CD4-positive, alpha-beta T cell (primary cell): ENCODE measurements at regions of chr1 and their contacts with region 1.

Region 1: DNA sequence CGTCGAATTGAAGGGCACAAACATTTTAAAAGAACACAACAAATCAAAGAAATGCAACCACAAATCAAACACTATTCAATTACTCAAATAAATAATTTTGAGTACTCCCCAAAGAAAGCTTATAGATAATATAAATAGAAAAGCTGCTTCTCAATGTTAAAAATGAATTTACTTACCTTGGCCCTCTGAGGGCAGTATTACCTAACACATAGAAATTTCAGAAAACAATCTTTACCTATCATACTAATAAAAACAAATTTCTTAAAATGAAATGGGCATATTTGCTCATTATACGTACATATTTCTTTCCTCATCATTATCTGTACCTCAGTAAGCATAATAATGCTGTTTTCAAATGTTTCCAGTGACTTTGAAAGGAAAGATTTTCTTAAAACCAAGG is 141.8 kb downstream of the AKT3 start:
- DNase-seq: peak in 3 of 14 experiments; percentile 19 to 27 (median 20)
- ATAC-seq: no peak
- H3K4me3 ChIP-seq: no peak overlapping the region
- H3K4me3 Mint-ChIP-seq: no peak overlapping the region
- H3K27ac ChIP-seq: no peak overlapping the region
- H3K27ac Mint-ChIP-seq: no peak overlapping the region
- H3K4me1 ChIP-seq: no peaks in the 10 kb centered on the region
- H3K4me1 Mint-ChIP-seq: peaks cover 32% of the 10 kb centered on the region
- H3K27me3 ChIP-seq: no peaks in the 10 kb centered on the region
- H3K27me3 Mint-ChIP-seq: no peaks in the 10 kb centered on the region
- CTCF ChIP-seq: peak; percentile 50

Region 2: DNA sequence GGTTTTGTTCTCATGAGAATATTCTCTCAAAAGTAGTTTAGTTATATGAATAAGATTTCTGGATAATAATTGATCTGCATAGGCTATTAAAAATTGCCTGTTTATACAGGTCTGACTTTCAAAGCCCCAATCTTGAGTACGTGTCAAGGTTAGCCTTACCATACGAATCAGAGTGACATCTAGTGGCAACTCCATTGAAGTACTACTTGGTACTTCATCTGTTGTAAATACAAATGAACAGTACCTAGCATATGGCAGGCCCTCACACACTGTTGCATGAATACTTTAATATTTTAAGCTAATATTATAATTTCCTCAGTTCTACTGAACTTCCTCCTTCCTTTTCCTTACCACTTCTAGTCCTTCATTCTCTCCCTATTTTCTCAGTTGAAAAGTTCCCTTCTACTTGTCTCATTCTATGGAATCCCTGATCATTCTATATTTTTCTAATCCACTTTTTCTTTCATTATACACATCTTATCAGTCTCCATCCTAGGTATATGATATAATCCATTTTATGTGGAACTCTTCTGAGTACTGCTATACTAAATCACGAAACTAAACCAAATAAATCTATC is 40.6 kb after region 1 on chr1:
- CTCF ChIA-PET with region 1: interaction called, 3 read pairs
- POLR2A ChIA-PET with region 1: no interaction called
- intact Hi-C with region 1: loop called in 1 of 2 experiments (anchors 5 kb)
- DNase-seq: peak in 4 of 14 experiments; percentile 16 to 81 (median 72)
- ATAC-seq: peak; percentile 98
- H3K4me3 ChIP-seq: no peak overlapping the region
- H3K4me3 Mint-ChIP-seq: no peak overlapping the region
- H3K27ac ChIP-seq: no peak overlapping the region
- H3K27ac Mint-ChIP-seq: peak overlapping the region; percentile 52
- H3K4me1 ChIP-seq: peaks cover 2% of the 10 kb centered on the region
- H3K4me1 Mint-ChIP-seq: peaks cover 59% of the 10 kb centered on the region
- H3K27me3 ChIP-seq: no peaks in the 10 kb centered on the region
- H3K27me3 Mint-ChIP-seq: no peaks in the 10 kb centered on the region
- CTCF ChIP-seq: peak; percentile 83

Region 3: GRCh38 chr1:243946946-243947345 is 238.7 kb after region 1 on chr1:
- CTCF ChIA-PET with region 1: no interaction called
- POLR2A ChIA-PET with region 1: no interaction called
- intact Hi-C with region 1: loop called (anchors 1 to 5 kb)
- DNase-seq: peak; percentile 12 to 64 (median 32)
- ATAC-seq: peak; percentile 55
- H3K4me3 ChIP-seq: no peak overlapping the region
- H3K4me3 Mint-ChIP-seq: no peak overlapping the region
- H3K27ac ChIP-seq: no peak overlapping the region
- H3K27ac Mint-ChIP-seq: no peak overlapping the region
- H3K4me1 ChIP-seq: no peaks in the 10 kb centered on the region
- H3K4me1 Mint-ChIP-seq: no peaks in the 10 kb centered on the region
- H3K27me3 ChIP-seq: no peaks in the 10 kb centered on the region
- H3K27me3 Mint-ChIP-seq: no peaks in the 10 kb centered on the region
- CTCF ChIP-seq: peak; percentile 75